GM12878 (cell line): ENCODE measurements at regions of chr3 and their contacts with region 1.

Region 1: DNA sequence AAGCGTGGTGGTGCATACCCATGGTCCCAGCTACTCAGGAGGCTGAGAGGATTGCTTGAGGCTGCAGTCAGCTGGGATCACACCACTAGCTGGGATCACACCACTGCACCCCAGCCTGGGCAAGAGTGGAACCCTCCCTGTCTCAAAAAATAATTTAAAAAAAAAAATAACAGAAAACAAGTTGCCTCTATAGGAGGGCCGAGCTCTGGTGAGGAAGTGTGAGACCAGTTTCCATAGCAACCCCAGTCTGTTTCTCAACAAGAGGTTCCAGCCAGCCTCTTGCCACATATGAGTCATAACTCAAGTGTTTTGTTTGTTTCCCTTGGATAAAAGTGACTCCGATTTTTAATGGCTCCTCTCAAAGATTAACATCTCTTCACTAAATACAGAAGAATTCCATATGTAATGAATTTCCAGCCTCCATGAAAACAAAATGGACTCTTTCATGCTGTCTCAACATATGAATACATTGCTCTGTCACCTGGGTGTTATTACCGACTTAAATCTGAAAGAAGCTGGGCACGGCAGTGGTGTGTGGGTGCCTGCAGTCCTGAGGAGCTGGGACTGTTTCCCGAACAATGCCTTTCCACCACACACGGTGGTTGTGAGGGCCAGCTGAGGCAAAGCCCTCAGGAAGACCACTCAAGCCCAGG is 19.7 kb downstream of the TMEM43 start:
- DNase-seq: peak; percentile 52
- ATAC-seq: peak; percentile 96
- H3K4me3 ChIP-seq: no peak overlapping the region
- H3K27ac ChIP-seq: peak overlapping the region; percentile 31; the same call in 1 of the 2 replicates
- H3K4me1 ChIP-seq: peaks cover 16% of the 10 kb centered on the region
- H3K27me3 ChIP-seq: no peaks in the 10 kb centered on the region
- CTCF ChIP-seq: no peak
- EP300 ChIP-seq: peak; percentile 82 to 94
- POLR2A ChIP-seq: no peak
- RAD21 ChIP-seq: no peak

Region 2: GRCh38 chr3:14124615-14125190 is 19.8 kb before region 1 on chr3 and contains the starts of genes CHCHD4 and TMEM43:
- CTCF ChIA-PET with region 1: interaction called, 3 read pairs
- POLR2A ChIA-PET with region 1: interaction called, 10 read pairs
- RAD21 ChIA-PET with region 1: interaction called, 8 read pairs
- SMC1A ChIA-PET with region 1: interaction called, 4 read pairs
- in situ Hi-C with region 1: no loop called
- intact Hi-C with region 1: no loop called
- DNase-seq: peak; percentile 95
- ATAC-seq: peak; percentile 90
- H3K4me3 ChIP-seq: peak within 1 kb of the TSS; percentile 93
- H3K27ac ChIP-seq: peak within 1 kb of the TSS; percentile 81
- H3K4me1 ChIP-seq: peaks cover 8% of the 10 kb centered on the region
- H3K27me3 ChIP-seq: no peaks in the 10 kb centered on the region
- CTCF ChIP-seq: no peak
- EP300 ChIP-seq: no peak
- POLR2A ChIP-seq: peak; percentile 79
- RAD21 ChIP-seq: no peak
- polyA plus RNA-seq, gene CHCHD4: 37.9 to 46.8 TPM
- polyA plus RNA-seq, gene TMEM43: 7.2 to 7.6 TPM